ENCODE measurements at regions of chr5 and their contacts with region 1.

Region 1: GRCh38 chr5:96868603-96869371 is 7.5 kb upstream of the ERAP2 start:
- DNase-seq: peak in 2 of 5 donors; percentile 48 to 56
- H3K4me3 ChIP-seq: no peak overlapping the region
- H3K4me3 Mint-ChIP-seq: no peak overlapping the region
- H3K27ac ChIP-seq: no peak overlapping the region
- H3K27ac Mint-ChIP-seq: no peak overlapping the region
- H3K4me1 ChIP-seq: peaks cover 32% of the 10 kb centered on the region
- H3K4me1 Mint-ChIP-seq: peaks cover 18 to 42% (median 38%) of the 10 kb centered on the region in 3 donors
- H3K27me3 ChIP-seq: no peaks in the 10 kb centered on the region
- H3K27me3 Mint-ChIP-seq: peaks cover 0 to 6% of the 10 kb centered on the region in 2 donors

Region 2: GRCh38 chr5:96851312-96852062 is 17.3 kb before region 1 on chr5:
- CTCF ChIA-PET with region 1: no interaction called
- POLR2A ChIA-PET with region 1: no interaction called
- DNase-seq: no peak
- H3K4me3 ChIP-seq: no peak overlapping the region
- H3K4me3 Mint-ChIP-seq: no peak overlapping the region
- H3K27ac ChIP-seq: no peak overlapping the region
- H3K27ac Mint-ChIP-seq: peak overlapping the region in 2 of 8 donors; percentile 37 to 76
- H3K4me1 ChIP-seq: no peaks in the 10 kb centered on the region
- H3K4me1 Mint-ChIP-seq: no peaks in the 10 kb centered on the region
- H3K27me3 ChIP-seq: no peaks in the 10 kb centered on the region
- H3K27me3 Mint-ChIP-seq: peaks cover 5 to 11% of the 10 kb centered on the region in 2 donors

Region 3: GRCh38 chr5:96885518-96886338 is 16.9 kb after region 1 on chr5:
- CTCF ChIA-PET with region 1: interaction called, 12 read pairs
- POLR2A ChIA-PET with region 1: no interaction called
- DNase-seq: peak in 4 of 5 donors; percentile 23 to 62 (median 58)
- H3K4me3 ChIP-seq: peak overlapping the region; percentile 10
- H3K4me3 Mint-ChIP-seq: peak overlapping the region; percentile 28 to 83 (median 81)
- H3K27ac ChIP-seq: peak overlapping the region; percentile 43
- H3K27ac Mint-ChIP-seq: peak overlapping the region; percentile 92 to 96 (median 95)
- H3K4me1 ChIP-seq: peaks cover 59% of the 10 kb centered on the region
- H3K4me1 Mint-ChIP-seq: peaks cover 61 to 76% (median 72%) of the 10 kb centered on the region in 3 donors
- H3K27me3 ChIP-seq: no peaks in the 10 kb centered on the region
- H3K27me3 Mint-ChIP-seq: no peaks in the 10 kb centered on the region

Region 4: DNA sequence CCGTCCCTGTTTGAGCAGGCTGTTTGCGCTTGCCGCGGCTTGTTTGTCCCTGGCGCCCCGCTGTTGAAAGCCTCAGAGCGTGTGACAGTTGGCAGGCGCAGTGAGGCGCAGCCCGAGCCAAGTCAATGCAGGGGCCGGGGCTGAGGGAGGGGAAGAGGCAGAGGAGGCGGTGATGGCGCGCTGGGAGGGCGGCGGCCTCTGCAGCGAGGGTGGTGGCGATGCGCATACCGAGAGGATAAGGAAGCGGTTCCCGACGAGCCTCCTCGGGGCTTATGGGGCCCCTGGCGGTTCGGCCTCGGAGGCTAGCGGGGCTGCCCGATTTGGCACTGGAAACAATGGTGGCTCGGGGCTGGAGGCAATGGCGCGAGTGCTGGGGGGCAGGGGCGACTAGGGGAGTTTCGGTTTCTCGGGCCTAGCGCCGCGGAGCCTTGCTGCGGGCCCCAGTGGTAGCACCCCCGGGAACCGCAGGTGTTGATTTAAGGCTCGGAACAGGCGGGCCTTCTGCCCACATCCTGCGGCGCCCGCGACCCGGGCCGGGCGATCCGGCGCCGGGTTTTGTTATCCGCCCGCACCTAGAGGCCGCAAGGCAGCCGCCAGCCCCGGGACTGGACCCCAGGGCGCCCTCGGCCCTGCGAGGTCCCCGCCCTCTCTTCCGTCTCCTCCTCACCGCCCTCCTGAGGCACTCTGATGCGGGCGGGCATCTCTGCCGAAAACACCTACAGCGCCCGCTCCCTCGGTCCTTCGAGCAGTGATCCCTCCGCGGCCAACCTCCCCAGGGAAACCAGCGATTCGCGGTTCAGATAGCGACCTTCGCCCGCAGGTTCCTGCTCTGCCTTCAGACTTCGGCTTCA is 66.1 kb after region 1 on chr5:
- CTCF ChIA-PET with region 1: interaction called, 10 read pairs
- POLR2A ChIA-PET with region 1: interaction called, 7 read pairs
- DNase-seq: peak; percentile 87 to 99 (median 96)
- H3K4me3 ChIP-seq: peak overlapping the region; percentile 89
- H3K4me3 Mint-ChIP-seq: peak overlapping the region; percentile 82 to 94 (median 91)
- H3K27ac ChIP-seq: peak overlapping the region; percentile 81
- H3K27ac Mint-ChIP-seq: peak overlapping the region; percentile 85 to 100 (median 96)
- H3K4me1 ChIP-seq: peaks cover 67% of the 10 kb centered on the region
- H3K4me1 Mint-ChIP-seq: peaks cover 66 to 75% (median 75%) of the 10 kb centered on the region in 3 donors
- H3K27me3 ChIP-seq: no peaks in the 10 kb centered on the region
- H3K27me3 Mint-ChIP-seq: peaks cover 0 to 3% of the 10 kb centered on the region in 2 donors

Region 5: GRCh38 chr5:97142521-97143254 is 273.9 kb after region 1 on chr5 and contains the start of gene LIX1:
- CTCF ChIA-PET with region 1: interaction called, 11 read pairs
- POLR2A ChIA-PET with region 1: no interaction called
- DNase-seq: peak in 2 of 5 donors; percentile 4 to 26
- H3K4me3 ChIP-seq: no peak within 1 kb of the TSS
- H3K4me3 Mint-ChIP-seq: no peak within 1 kb of the TSS
- H3K27ac ChIP-seq: no peak within 1 kb of the TSS
- H3K27ac Mint-ChIP-seq: peak within 1 kb of the TSS in 1 of 8 donors; percentile 36
- H3K4me1 ChIP-seq: no peaks in the 10 kb centered on the region
- H3K4me1 Mint-ChIP-seq: no peaks in the 10 kb centered on the region
- H3K27me3 ChIP-seq: no peaks in the 10 kb centered on the region
- H3K27me3 Mint-ChIP-seq: peaks cover 5 to 30% of the 10 kb centered on the region in 2 donors
- total RNA-seq, gene LIX1: not detected

Region 6: DNA sequence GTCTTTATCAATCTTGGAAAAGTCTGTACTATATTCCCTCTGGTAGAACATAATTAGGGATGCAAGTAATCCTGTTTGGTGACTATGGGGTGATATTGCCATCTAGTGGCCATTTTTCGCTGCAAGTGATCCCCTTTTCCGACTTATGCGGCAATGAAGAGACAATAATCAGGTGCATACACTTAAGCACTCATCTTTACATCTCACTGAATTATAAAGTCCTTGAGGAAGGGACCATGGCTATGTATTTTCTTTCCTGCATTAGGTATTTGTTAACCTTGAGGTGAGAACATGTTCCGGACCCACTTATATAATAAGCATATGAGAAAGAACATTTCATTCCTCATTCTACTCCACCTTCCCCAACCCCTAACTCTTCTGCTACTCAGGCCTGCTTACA is 293.3 kb after region 1 on chr5:
- CTCF ChIA-PET with region 1: interaction called, 130 read pairs
- POLR2A ChIA-PET with region 1: no interaction called
- DNase-seq: peak; percentile 12 to 62 (median 46)
- H3K4me3 ChIP-seq: no peak overlapping the region
- H3K4me3 Mint-ChIP-seq: no peak overlapping the region
- H3K27ac ChIP-seq: no peak overlapping the region
- H3K27ac Mint-ChIP-seq: peak overlapping the region in 2 of 8 donors; percentile 31 to 71
- H3K4me1 ChIP-seq: no peaks in the 10 kb centered on the region
- H3K4me1 Mint-ChIP-seq: peaks cover 3 to 10% (median 8%) of the 10 kb centered on the region in 3 donors
- H3K27me3 ChIP-seq: no peaks in the 10 kb centered on the region
- H3K27me3 Mint-ChIP-seq: peaks cover 5% of the 10 kb centered on the region in 2 donors

Measured in CD8-positive, alpha-beta memory T cell (primary cell).